Ascending aorta (tissue), 2 donors: ENCODE measurements at regions of chrX and their contacts with region 1.

Region 1: GRCh38 chrX:40933132-40933705 is 152.0 kb upstream of the USP9X start:
- DNase-seq: no peak
- H3K4me3 ChIP-seq: peak overlapping the region; percentile 14 to 49
- H3K27ac ChIP-seq: peak overlapping the region; percentile 50 to 55
- H3K4me1 ChIP-seq: peaks cover 0 to 2% of the 10 kb centered on the region in 2 donors
- H3K27me3 ChIP-seq: no peaks in the 10 kb centered on the region
- CTCF ChIP-seq: no peak

Region 2: DNA sequence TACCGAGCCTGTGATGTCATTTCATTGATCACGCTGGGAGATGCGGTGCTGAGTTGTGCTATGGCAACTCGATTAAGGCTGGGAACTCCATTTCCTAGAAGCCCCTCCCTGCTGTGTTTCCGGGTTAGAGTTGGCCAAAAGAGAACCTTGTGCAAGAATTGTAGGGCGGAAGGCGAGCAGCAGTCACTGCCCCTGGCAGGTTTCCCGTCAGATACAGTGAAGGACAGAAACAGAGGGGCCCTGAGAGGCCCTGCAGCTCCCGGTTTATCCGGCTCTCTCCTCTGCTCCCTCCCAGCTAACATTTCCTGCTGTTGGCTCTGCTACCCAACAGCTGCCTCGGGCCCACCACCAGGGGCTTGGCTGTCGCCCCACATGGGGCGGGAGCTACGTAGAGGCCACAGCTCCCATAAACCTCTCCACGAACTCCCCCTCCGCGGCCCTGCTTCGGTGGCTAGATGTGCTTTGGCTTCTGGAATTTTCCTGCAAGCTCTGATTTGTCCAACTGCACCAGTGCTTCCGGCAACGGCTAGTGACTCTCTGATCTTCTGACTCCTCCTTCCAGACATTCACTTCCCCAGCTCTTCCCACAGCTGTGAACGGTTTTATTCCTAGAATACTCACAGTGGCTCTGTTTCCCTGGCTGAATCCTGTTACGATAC is 77.1 kb after region 1 on chrX:
- intact Hi-C with region 1: loop called (anchors 5 kb)
- DNase-seq: peak; percentile 22 to 88
- H3K4me3 ChIP-seq: peak overlapping the region; percentile 47 to 58
- H3K27ac ChIP-seq: peak overlapping the region; percentile 83 to 85
- H3K4me1 ChIP-seq: peaks cover 0 to 3% of the 10 kb centered on the region in 2 donors
- H3K27me3 ChIP-seq: no peaks in the 10 kb centered on the region
- CTCF ChIP-seq: no peak

Region 3: GRCh38 chrX:41116948-41117347 is 183.7 kb after region 1 on chrX:
- intact Hi-C with region 1: loop called (anchors 10 kb)
- DNase-seq: no peak
- H3K4me3 ChIP-seq: no peak overlapping the region
- H3K27ac ChIP-seq: no peak overlapping the region
- H3K4me1 ChIP-seq: peaks cover 0 to 12% of the 10 kb centered on the region in 2 donors
- H3K27me3 ChIP-seq: no peaks in the 10 kb centered on the region
- CTCF ChIP-seq: no peak

Region 4: GRCh38 chrX:41338422-41338821 is 405.2 kb after region 1 on chrX:
- intact Hi-C with region 1: no loop called
- DNase-seq: no peak
- H3K4me3 ChIP-seq: peak overlapping the region; percentile 82 to 99
- H3K27ac ChIP-seq: peak overlapping the region in 1 of 2 donors; percentile 21
- H3K4me1 ChIP-seq: peaks cover 7 to 21% of the 10 kb centered on the region in 2 donors
- H3K27me3 ChIP-seq: no peaks in the 10 kb centered on the region
- CTCF ChIP-seq: no peak